Adrenal gland (tissue), 19 donors: ENCODE measurements at regions of chr5 and their contacts with region 1.

Region 1: DNA sequence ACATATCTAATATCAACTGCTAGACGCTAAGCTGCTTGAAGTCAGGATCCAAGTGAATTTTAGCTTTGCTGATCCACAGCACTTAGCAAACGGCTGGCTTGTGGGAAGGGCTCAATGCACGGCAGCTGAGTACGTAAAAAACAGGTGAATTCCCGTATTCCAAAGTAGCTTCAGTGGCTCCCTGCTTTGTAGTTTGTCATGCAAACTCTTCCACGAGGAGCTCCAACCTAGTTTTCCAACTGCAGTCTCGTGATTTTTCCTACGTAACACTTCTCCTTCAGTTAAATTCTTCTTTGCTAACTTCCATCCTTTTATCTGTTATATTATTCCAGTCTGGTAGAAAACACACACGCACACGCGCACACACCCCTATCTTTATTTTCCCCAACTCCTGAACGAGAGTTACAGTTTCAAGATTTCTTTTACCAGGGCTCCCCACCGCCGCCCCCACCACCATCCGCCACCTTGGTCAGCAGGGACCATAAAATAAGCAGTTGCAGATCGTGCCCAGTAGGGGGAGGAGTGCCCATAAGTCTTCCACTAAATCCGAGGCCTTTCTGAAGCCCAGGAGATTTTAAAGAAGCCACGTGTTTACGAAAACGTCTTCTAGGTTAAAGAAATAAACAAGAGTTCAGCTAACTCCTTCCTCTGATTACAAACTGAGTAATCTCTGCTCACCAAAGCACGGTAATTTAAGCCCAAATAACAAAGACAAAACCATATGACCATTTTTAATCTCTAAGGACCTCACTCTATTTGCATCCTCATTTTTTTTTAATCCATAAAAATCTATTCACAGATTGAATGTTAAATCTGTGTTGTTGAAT is 34.8 kb upstream of the TRIO start:
- DNase-seq: peak; percentile 65 to 85 (median 75)
- H3K4me3 ChIP-seq: peak overlapping the region in 1 of 4 donors; percentile 45
- H3K27ac ChIP-seq: no peak overlapping the region
- H3K4me1 ChIP-seq: peaks cover 0 to 8% of the 10 kb centered on the region in 2 donors
- H3K27me3 ChIP-seq: no peaks in the 10 kb centered on the region
- CTCF ChIP-seq: peak; percentile 59 to 78 (median 70)
- POLR2A ChIP-seq: no peak

Region 2: DNA sequence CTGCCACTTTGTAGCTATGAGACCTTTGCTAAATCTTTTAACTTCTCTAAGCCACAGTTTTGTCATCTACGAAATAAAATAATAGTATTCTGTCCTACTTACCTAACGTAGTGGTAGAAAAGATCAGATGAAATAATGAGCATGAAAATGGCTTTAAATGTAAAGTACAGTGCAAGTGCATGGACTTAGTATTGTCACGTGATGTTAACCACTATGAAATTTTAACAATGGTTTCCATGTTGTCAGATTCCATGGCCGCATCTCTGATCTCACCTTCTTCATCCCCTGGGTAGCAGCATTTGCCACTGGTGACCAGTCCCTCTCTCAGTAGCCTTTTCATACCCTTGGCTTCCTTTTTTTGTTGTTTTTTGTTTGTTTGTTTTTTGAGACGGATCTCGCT is 209.8 kb before region 1 on chr5:
- intact Hi-C with region 1: no loop called
- DNase-seq: no peak
- H3K4me3 ChIP-seq: no peak overlapping the region
- H3K27ac ChIP-seq: no peak overlapping the region
- H3K4me1 ChIP-seq: no peaks in the 10 kb centered on the region
- H3K27me3 ChIP-seq: no peaks in the 10 kb centered on the region
- CTCF ChIP-seq: no peak
- POLR2A ChIP-seq: no peak

Region 3: GRCh38 chr5:13994621-13995253 is 113.6 kb before region 1 on chr5:
- intact Hi-C with region 1: loop called in 1 of 2 experiments (anchors 10 kb)
- DNase-seq: no peak
- H3K4me3 ChIP-seq: no peak overlapping the region
- H3K27ac ChIP-seq: no peak overlapping the region
- H3K4me1 ChIP-seq: no peaks in the 10 kb centered on the region
- H3K27me3 ChIP-seq: no peaks in the 10 kb centered on the region
- CTCF ChIP-seq: no peak
- POLR2A ChIP-seq: no peak

Region 4: DNA sequence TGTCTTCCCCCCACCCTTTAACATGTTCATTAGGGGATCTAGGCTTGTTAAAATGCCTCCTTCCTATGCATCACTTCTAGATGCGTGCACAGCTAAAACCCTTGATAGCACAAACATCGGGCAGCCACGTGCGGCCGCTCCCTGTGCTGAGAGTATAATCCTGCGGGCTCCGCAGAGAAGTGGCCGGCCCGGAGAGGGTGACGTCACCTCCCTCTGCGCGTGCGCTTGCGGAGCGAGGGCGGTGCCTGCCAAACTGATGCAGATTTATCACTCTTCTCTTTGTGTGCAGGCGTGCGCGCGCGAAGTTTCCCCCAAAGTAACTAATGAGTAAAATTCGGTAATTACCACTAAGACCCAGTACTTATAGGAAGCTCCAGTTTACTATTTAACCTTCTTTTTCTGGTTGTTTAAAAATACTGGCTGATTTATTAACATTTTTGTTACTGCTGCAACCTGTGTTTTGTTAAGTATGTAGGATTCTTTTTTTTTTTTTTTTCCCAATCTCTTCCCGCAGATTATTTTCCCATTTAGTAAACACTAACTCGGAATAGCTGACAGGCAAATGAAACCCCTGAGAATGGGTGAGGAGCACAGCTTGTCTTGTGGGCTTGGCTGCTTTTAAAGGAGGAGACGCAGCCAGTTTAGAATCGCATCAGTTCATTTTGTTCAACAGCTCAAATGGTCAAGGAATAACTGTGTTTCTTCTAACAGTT is 156.4 kb after region 1 on chr5:
- intact Hi-C with region 1: loop called (anchors 5 kb)
- DNase-seq: peak; percentile 86 to 96 (median 93)
- H3K4me3 ChIP-seq: peak overlapping the region in 2 of 4 donors; percentile 7 to 32
- H3K27ac ChIP-seq: peak overlapping the region in 1 of 5 donors; percentile 31
- H3K4me1 ChIP-seq: peaks cover 19 to 45% of the 10 kb centered on the region in 2 donors
- H3K27me3 ChIP-seq: no peaks in the 10 kb centered on the region
- CTCF ChIP-seq: no peak
- POLR2A ChIP-seq: peak in 1 of 2 donors; percentile 64